RWPE1 (cell line): ENCODE measurements at regions of chr7 and their contacts with region 1.

Region 1: GRCh38 chr7:83936056-83936708 is 258.4 kb downstream of the SEMA3A start:
- DNase-seq: peak; percentile 32
- H3K27ac ChIP-seq: no peak overlapping the region
- CTCF ChIP-seq: peak; percentile 97

Region 2: DNA sequence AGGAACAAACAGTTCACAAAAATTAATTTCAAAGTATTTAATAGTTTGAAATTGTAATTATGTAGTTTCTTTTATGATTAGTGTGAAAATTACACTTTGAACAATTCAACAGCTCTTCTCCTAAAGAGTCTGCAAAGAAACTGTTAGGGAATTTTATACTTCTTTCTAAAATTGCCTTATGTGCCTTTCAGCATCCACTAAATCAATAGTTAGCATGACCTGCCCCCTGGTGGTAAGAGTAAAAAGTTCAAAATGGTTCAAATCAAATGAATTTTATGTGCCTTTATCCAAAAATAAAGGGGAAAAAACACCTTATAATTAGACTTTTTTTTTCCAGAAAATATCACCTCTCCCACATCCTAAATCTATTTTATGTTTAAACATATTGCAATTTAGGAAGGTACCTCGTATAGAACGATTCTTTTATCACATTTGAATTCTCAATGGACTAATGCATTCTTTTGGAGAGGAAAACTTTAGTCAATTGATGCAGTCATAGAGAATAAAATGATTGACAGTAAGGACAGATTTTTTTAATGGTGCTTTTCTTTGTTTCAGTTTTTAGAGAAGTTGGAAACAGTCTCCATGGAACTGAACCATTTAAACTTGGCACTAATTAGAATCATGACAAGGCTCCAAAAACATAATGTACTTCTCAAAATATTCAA is 1087.0 kb after region 1 on chr7:
- CTCF ChIA-PET with region 1: interaction called, 18 read pairs
- POLR2A ChIA-PET with region 1: no interaction called
- DNase-seq: peak; percentile 26
- H3K27ac ChIP-seq: no peak overlapping the region
- CTCF ChIP-seq: peak; percentile 71